Tibial artery (tissue), 4 donors: ENCODE measurements at regions of chr9 and their contacts with region 1.

Region 1: GRCh38 chr9:134007150-134007549 is 15.0 kb upstream of the VAV2 start:
- DNase-seq: no peak
- H3K4me3 ChIP-seq: no peak overlapping the region
- H3K27ac ChIP-seq: no peak overlapping the region
- H3K4me1 ChIP-seq: no peaks in the 10 kb centered on the region
- H3K27me3 ChIP-seq: peaks cover 0 to 37% of the 10 kb centered on the region in 2 donors
- CTCF ChIP-seq: no peak

Region 2: DNA sequence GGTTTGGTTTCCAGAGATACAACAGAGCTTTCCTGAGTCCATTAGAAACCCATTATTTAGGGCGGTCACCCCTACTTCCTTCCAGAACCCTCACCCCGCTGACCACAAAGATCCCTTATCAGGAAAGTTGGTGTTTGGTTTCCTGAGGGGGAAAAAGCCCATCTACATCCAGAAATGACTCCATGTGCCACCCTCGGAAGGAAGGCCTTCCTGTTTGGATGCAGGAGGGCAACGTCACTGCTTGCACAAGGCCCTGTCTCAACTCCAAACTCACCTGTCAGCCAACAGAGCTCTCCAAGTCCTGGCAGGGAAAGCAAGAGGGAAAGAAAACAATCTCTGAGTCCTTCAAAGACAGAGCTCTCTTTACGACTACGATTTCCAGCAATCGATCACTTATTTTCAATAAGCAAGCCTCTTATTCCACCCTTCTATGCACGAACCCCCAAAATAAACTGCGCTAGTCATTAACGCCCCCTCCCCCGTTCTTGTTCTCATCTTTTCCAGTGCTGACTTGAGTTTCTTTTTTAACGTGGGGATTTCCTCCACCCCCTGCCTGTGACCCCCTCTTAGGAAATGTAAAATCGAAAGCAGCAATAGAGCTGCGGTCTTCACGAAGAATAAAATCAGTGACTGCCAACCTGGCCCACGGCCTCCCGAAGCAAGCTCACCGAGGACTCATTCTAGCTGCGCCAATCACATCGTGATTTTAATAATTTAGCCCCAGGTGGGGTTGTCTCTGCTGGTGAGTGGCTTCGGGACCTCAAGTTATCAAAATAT is 1881.0 kb before region 1 on chr9:
- intact Hi-C with region 1: loop called (anchors 5 kb)
- DNase-seq: no peak
- H3K4me3 ChIP-seq: no peak overlapping the region
- H3K27ac ChIP-seq: no peak overlapping the region
- H3K4me1 ChIP-seq: no peaks in the 10 kb centered on the region
- H3K27me3 ChIP-seq: peaks cover 0 to 75% of the 10 kb centered on the region in 2 donors
- CTCF ChIP-seq: no peak